ENCODE measurements at regions of chr14 and their contacts with region 1.

Region 1: GRCh38 chr14:73344319-73344718 is 107.0 kb downstream of the PAPLN start:
- DNase-seq: no peak
- H3K4me3 ChIP-seq: no peak overlapping the region
- H3K27ac ChIP-seq: no peak overlapping the region
- H3K4me1 ChIP-seq: no peaks in the 10 kb centered on the region
- H3K27me3 ChIP-seq: no peaks in the 10 kb centered on the region
- CTCF ChIP-seq: no peak

Region 2: DNA sequence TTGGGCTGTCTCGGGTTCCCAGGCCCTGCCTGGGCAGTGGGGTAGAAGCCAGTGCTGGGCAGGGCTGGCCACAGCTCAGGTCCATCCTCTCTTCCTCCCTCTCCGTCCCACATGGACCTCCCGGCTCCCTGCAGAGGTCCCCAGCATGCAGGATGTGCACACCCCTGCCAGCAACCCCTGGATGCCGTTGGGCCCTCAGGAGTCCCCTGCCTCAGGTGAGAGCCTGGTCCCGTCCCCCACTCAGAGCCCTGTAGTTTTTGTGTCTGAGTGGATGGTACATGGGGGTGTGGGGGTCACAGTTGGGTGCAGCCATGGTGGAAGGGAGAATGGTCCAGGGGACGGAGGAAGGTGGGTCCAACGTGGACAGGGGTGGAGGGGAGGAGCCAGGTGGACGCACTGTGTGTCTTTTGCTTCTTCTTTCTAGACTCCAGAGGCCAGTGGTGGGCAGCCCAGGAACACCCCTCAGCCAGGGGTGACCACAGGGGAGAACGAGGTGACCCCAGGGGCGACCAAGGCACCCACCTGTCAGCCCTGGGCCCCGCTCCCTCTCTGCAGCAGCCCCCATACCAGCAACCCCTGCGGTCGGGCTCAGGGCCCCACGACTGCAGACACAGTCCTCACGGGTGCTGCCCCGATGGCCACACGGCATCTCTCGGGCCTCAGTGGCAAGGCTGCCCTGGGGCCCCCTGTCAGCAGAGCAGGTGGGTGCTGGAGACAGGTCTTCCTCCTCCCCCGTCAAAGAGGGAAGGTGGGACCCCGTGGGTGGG is 85.3 kb before region 1 on chr14:
- CTCF ChIA-PET with region 1: no interaction called
- dilution Hi-C with region 1: loop called (anchors 5 kb)
- in situ Hi-C with region 1: no loop called
- intact Hi-C with region 1: no loop called
- DNase-seq: no peak
- H3K4me3 ChIP-seq: no peak overlapping the region
- H3K27ac ChIP-seq: no peak overlapping the region
- H3K4me1 ChIP-seq: no peaks in the 10 kb centered on the region
- H3K27me3 ChIP-seq: no peaks in the 10 kb centered on the region
- CTCF ChIP-seq: no peak

Region 3: GRCh38 chr14:73311708-73312030 is 32.6 kb before region 1 on chr14:
- CTCF ChIA-PET with region 1: no interaction called
- dilution Hi-C with region 1: no loop called
- in situ Hi-C with region 1: no loop called
- intact Hi-C with region 1: no loop called
- DNase-seq: no peak
- H3K4me3 ChIP-seq: no peak overlapping the region
- H3K27ac ChIP-seq: no peak overlapping the region
- H3K4me1 ChIP-seq: peaks cover 6% of the 10 kb centered on the region
- H3K27me3 ChIP-seq: no peaks in the 10 kb centered on the region
- CTCF ChIP-seq: no peak

Region 4: GRCh38 chr14:73599499-73599898 is 255.2 kb after region 1 on chr14:
- CTCF ChIA-PET with region 1: no interaction called
- dilution Hi-C with region 1: no loop called
- in situ Hi-C with region 1: no loop called
- intact Hi-C with region 1: no loop called
- DNase-seq: no peak
- H3K4me3 ChIP-seq: no peak overlapping the region
- H3K27ac ChIP-seq: no peak overlapping the region
- H3K4me1 ChIP-seq: peaks cover 19% of the 10 kb centered on the region
- H3K27me3 ChIP-seq: no peaks in the 10 kb centered on the region
- CTCF ChIP-seq: no peak

Measured in mammary epithelial cell (primary cell).